Activated CD4-positive, alpha-beta memory T cell treated with anti-CD3 and anti-CD28 coated beads, Interleukin-2, amount 10 ng/mL, durations not matched to agents 7 days and 5 days (primary cell): ENCODE measurements at regions of chr11 and their contacts with region 1.

Region 1: DNA sequence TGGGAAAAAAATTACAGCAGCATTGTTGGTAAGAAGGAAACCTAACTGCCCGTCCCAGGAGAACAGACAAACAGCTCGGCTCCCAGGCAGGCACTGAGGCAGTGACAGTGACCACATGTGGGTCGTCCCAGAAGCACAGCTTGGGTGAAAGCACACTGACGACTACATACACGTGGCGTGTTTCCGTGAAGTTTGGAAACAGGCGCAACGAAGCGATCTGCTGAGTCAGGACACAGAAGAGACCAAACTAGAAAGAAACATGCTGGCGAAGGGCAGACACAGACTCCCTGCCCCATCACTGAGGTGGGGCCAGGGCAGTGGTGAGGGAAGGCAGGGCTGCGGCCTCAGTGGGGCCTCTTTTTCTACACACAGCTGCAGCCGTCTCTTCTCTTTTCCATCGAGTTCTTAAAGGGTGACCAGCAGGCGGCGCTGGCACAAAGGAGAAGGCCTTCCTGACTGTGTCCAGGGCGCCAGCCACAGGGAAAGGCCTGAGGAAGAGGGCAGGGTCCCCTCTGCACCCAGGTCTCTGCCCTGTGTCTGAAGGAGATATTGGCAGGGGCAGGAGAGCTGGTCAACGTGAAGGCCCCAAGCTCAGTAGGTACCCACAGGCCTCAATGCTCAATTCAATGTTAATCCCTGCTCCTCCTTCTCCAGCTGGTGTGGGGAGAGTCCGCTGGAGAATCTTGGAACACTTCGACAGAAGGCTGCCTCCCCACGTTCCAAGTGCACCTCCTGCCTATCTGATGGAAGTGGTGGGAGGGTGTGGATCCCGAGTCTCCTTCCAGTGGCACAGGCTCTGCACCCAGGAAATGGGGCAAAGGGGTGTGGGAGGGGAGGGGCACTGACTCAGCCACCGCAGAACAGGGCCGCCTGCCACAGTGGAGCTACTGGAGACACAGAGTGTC is 19.9 kb downstream of the CARS1 start:
- DNase-seq: peak; percentile 68
- H3K4me3 Mint-ChIP-seq: no peak overlapping the region
- H3K27ac Mint-ChIP-seq: peak overlapping the region; percentile 55
- H3K4me1 Mint-ChIP-seq: peaks cover 47% of the 10 kb centered on the region
- H3K27me3 Mint-ChIP-seq: no peaks in the 10 kb centered on the region

Region 2: GRCh38 chr11:3021125-3021524 is 16.2 kb before region 1 on chr11:
- CTCF ChIA-PET with region 1: interaction called, 21 read pairs
- POLR2A ChIA-PET with region 1: interaction called, 7 read pairs
- DNase-seq: peak; percentile 44
- H3K4me3 Mint-ChIP-seq: no peak overlapping the region
- H3K27ac Mint-ChIP-seq: no peak overlapping the region
- H3K4me1 Mint-ChIP-seq: peaks cover 41% of the 10 kb centered on the region
- H3K27me3 Mint-ChIP-seq: no peaks in the 10 kb centered on the region

Region 3: GRCh38 chr11:3026803-3027202 is 10.5 kb before region 1 on chr11:
- CTCF ChIA-PET with region 1: interaction called, 12 read pairs
- POLR2A ChIA-PET with region 1: interaction called, 4 read pairs
- DNase-seq: no peak
- H3K4me3 Mint-ChIP-seq: no peak overlapping the region
- H3K27ac Mint-ChIP-seq: no peak overlapping the region
- H3K4me1 Mint-ChIP-seq: peaks cover 38% of the 10 kb centered on the region
- H3K27me3 Mint-ChIP-seq: no peaks in the 10 kb centered on the region

Region 4: DNA sequence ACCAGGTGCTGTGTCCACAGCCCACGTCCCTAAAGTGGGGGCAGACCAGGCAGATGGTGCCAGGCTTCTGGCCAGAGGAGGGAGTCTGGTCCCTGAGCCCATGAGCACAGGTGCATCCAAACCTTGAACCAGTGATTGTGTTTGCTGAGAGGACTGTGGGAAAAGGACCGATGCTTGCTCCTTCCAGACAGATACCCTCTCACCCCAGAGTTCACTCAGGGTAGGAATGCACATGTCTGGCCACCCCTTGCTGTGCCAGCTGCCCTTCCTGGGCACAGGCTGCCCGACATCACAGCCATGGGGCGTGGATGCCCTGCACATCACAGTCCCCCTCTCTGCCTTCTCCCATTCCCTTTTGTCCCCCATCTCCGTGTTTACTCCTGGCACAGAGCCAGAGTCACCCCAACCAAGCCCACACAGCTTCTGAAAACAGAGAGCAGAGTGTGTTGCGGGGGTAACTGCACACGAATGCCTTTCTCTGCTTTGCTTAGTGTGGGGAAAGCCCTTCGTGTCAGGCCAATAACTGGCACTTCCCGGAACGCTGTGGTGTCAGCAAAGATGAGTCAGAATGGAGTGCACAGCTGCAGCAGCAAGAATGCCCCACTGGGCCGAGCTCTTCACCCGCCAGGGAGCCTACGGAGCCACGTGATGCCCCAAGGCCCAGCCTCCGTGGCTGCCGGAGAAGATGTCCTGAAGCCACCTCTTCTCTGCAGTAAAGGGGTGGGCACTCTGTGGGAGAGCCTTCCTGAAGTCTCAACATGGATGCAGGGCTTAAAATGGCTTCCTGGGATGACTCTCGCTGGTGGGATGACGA is 12.3 kb after region 1 on chr11:
- CTCF ChIA-PET with region 1: interaction called, 35 read pairs
- POLR2A ChIA-PET with region 1: interaction called, 9 read pairs
- DNase-seq: peak; percentile 88
- H3K4me3 Mint-ChIP-seq: peak overlapping the region; percentile 61
- H3K27ac Mint-ChIP-seq: peak overlapping the region; percentile 95
- H3K4me1 Mint-ChIP-seq: peaks cover 49% of the 10 kb centered on the region
- H3K27me3 Mint-ChIP-seq: no peaks in the 10 kb centered on the region

Region 5: GRCh38 chr11:3057069-3057963 is 20.0 kb after region 1 on chr11 and contains the start of gene CARS1:
- CTCF ChIA-PET with region 1: interaction called, 14 read pairs
- POLR2A ChIA-PET with region 1: interaction called, 11 read pairs
- DNase-seq: peak; percentile 96
- H3K4me3 Mint-ChIP-seq: peak within 1 kb of the TSS; percentile 81
- H3K27ac Mint-ChIP-seq: peak within 1 kb of the TSS; percentile 83
- H3K4me1 Mint-ChIP-seq: peaks cover 47% of the 10 kb centered on the region
- H3K27me3 Mint-ChIP-seq: peaks cover 4% of the 10 kb centered on the region
- total RNA-seq, gene CARS1: 106 to 121 TPM